Natural killer cell (primary cell): ENCODE measurements at regions of chr7 and their contacts with region 1.

Region 1: GRCh38 chr7:7103343-7104313 is 78.7 kb upstream of the C1GALT1 start:
- DNase-seq: peak in 1 of 2 donors; percentile 83
- ATAC-seq: peak; percentile 55 to 78 (median 71)
- H3K4me3 ChIP-seq: no peak overlapping the region
- H3K4me3 Mint-ChIP-seq: no peak overlapping the region
- H3K27ac ChIP-seq: no peak overlapping the region
- H3K27ac Mint-ChIP-seq: no peak overlapping the region
- H3K4me1 ChIP-seq: no peaks in the 10 kb centered on the region
- H3K4me1 Mint-ChIP-seq: no peaks in the 10 kb centered on the region
- H3K27me3 ChIP-seq: no peaks in the 10 kb centered on the region
- H3K27me3 Mint-ChIP-seq: peaks cover 0 to 3% of the 10 kb centered on the region in 2 donors
- CTCF ChIP-seq: peak; percentile 71

Region 2: DNA sequence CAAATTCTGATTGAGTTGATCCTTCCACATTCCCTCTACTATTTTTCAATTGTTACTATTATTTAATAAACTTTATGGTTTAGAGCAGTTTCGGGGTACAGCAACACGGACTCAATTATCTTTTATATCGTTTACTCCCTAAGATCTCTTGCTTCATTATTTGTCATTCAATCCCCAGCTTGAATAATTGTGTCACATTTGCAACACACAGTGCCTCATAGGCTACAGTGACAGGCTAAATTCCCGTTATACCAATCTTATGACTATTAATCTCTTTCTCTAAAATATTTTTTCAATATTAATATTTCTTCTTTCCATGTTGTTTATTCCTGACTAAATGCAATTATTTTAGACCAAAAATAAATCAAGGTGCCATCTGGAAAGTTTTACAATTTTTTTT is 436.1 kb after region 1 on chr7:
- intact Hi-C with region 1: loop called (anchors 1 kb)
- DNase-seq: no peak
- ATAC-seq: no peak
- H3K4me3 ChIP-seq: no peak overlapping the region
- H3K4me3 Mint-ChIP-seq: no peak overlapping the region
- H3K27ac ChIP-seq: no peak overlapping the region
- H3K27ac Mint-ChIP-seq: no peak overlapping the region
- H3K4me1 ChIP-seq: no peaks in the 10 kb centered on the region
- H3K4me1 Mint-ChIP-seq: peaks cover 5 to 6% of the 10 kb centered on the region in 2 donors
- H3K27me3 ChIP-seq: no peaks in the 10 kb centered on the region
- H3K27me3 Mint-ChIP-seq: peaks cover 0 to 14% of the 10 kb centered on the region in 2 donors
- CTCF ChIP-seq: no peak

Region 3: DNA sequence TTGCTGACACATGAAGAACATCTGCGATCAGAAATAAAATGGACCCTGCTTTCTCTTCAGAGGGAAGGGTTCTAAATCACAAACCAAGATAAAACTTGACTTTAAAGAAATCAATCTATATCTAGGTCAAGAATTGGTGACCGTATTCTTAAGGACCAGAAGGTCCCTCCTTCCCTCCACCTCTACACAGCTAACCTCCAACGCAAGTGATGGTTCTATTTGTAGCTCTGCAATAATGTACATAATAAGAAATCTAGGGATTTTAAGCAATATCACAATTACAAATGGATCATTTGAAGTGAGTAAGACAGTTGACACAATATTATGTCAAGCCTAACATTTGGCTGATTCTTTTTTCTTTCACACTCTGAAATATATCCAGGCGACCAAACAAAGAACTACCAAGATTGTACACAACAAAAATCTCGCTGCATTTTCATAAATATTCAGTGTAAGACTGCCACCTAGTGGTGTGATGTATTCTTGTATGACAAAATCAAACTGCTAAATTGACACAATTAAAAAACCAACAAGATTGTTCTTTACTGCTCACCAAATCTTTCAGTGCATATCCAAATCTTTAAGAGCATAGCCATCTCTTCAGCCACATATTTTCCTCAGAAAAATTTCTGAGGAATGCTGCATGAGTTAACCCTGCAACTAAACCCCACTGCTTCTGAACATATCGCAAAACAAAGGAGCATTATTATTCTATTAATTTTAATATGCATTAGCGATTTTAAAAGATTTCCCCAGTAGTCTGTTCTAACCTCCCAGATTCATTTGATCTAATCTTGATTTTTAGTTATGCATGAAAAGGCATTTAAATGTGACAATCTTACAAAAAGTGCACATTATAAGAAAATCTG is 1113.8 kb after region 1 on chr7:
- intact Hi-C with region 1: loop called (anchors 2 kb)
- DNase-seq: peak in 1 of 2 donors; percentile 86
- ATAC-seq: peak; percentile 75 to 79 (median 77)
- H3K4me3 ChIP-seq: no peak overlapping the region
- H3K4me3 Mint-ChIP-seq: no peak overlapping the region
- H3K27ac ChIP-seq: no peak overlapping the region
- H3K27ac Mint-ChIP-seq: no peak overlapping the region
- H3K4me1 ChIP-seq: no peaks in the 10 kb centered on the region
- H3K4me1 Mint-ChIP-seq: peaks cover 5 to 6% of the 10 kb centered on the region in 2 donors
- H3K27me3 ChIP-seq: no peaks in the 10 kb centered on the region
- H3K27me3 Mint-ChIP-seq: peaks cover 0 to 4% of the 10 kb centered on the region in 2 donors
- CTCF ChIP-seq: peak; percentile 81